Activated naive CD4-positive, alpha-beta T cell treated with anti-CD3 and anti-CD28 coated beads for 36 hours (primary cell): ENCODE measurements at regions of chr6 and their contacts with region 1.

Region 1: DNA sequence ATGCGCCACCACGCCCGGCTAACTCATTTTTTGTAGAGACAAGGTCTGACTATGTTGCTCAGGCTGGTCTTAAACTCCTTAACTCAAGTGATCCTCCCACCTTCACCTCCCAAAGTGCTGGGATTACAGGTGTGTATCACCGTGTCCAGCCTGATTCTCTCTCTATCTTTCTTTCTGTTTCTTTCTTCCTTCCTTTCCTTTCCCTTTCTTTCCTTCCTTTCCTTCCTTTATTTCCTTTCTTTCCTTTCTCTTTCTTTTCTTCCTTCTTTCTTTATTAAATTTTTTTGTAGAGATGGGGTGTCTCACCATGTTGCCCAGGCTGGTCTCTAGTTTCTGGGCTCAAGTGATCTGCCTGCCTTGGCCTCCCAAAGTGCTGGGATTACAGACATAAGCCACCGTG is 38.7 kb upstream of the MTHFD1L start:
- DNase-seq: no peak
- H3K4me3 Mint-ChIP-seq: no peak overlapping the region
- H3K27ac Mint-ChIP-seq: no peak overlapping the region
- H3K4me1 Mint-ChIP-seq: no peaks in the 10 kb centered on the region
- H3K27me3 Mint-ChIP-seq: no peaks in the 10 kb centered on the region

Region 2: DNA sequence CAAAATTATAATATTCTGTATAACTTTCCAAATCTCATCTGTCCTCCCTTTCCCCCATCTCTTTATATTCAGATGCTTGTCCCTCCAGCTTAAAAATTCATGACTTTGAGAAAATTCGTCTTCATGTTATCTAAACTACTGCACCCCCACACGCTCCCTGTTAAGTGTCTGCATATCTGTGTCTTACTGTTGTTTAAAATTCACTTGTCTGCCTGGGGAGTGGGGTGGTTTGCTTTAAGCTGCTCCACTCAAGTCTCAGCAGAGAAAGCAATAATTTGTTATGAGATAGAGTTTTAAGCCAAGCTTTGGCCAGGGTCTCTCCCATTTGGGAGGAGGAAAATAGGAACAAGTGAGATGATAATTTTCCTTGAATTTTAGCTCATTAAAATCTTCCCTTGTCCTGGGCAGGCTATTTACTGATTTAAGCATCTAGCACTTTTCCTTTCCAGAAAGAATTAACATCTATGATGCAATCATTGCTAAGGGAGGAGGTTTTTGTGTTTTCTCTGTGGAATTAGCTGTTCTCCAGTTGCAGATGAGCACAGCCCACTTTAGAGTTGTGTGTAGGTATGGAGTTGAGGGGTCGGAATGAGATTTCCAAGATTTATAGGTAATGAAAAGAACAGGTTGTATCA is 75.5 kb after region 1 on chr6:
- CTCF ChIA-PET with region 1: no interaction called
- intact Hi-C with region 1: loop called (anchors 2 kb)
- DNase-seq: no peak
- H3K4me3 Mint-ChIP-seq: no peak overlapping the region
- H3K27ac Mint-ChIP-seq: no peak overlapping the region
- H3K4me1 Mint-ChIP-seq: no peaks in the 10 kb centered on the region
- H3K27me3 Mint-ChIP-seq: no peaks in the 10 kb centered on the region